ENCODE measurements at regions of chr18 and their contacts with region 1.

Region 1: GRCh38 chr18:50203801-50204604 is 9.1 kb upstream of the MYO5B start:
- DNase-seq: peak in 5 of 6 donors; percentile 41 to 72 (median 62)
- ATAC-seq: peak; percentile 67 to 96 (median 94)
- H3K4me3 ChIP-seq: no peak overlapping the region
- H3K27ac ChIP-seq: no peak overlapping the region
- H3K4me1 ChIP-seq: no peaks in the 10 kb centered on the region
- H3K27me3 ChIP-seq: no peaks in the 10 kb centered on the region
- CTCF ChIP-seq: peak; percentile 12 to 49 (median 37)

Region 2: GRCh38 chr18:50009773-50010335 is 194.1 kb before region 1 on chr18:
- intact Hi-C with region 1: loop called in 1 of 3 experiments (anchors 10 kb)
- DNase-seq: peak in 5 of 6 donors; percentile 38 to 62 (median 46)
- ATAC-seq: peak; percentile 83 to 95 (median 94)
- H3K4me3 ChIP-seq: no peak overlapping the region
- H3K27ac ChIP-seq: no peak overlapping the region
- H3K4me1 ChIP-seq: peaks cover 0 to 5% (median 0%) of the 10 kb centered on the region in 3 donors
- H3K27me3 ChIP-seq: no peaks in the 10 kb centered on the region
- CTCF ChIP-seq: peak; percentile 34 to 49 (median 44)

Region 3: DNA sequence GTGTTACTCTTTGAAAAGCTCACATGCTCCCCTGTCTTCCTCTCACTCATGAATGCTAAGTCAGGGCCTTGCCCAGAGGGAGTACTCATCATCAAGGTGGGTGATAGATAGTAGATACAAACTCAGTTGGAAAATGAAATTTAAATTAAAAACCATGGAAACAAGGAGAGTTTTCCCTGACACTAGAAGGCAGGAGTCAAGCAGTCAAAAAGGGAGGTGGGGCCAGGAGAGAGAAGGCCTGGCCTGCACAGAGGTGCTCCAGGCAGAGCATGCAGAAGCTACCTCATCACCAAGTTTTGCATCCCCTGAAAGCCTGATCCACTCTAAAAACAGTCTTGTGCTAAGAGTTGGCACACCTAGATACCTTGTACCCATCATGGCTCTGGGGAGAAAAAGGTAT is 152.7 kb before region 1 on chr18:
- intact Hi-C with region 1: loop called in 1 of 3 experiments (anchors 10 kb)
- DNase-seq: no peak
- ATAC-seq: peak in 3 of 4 donors; percentile 69 to 78 (median 72)
- H3K4me3 ChIP-seq: no peak overlapping the region
- H3K27ac ChIP-seq: no peak overlapping the region
- H3K4me1 ChIP-seq: no peaks in the 10 kb centered on the region
- H3K27me3 ChIP-seq: no peaks in the 10 kb centered on the region
- CTCF ChIP-seq: no peak

Region 4: GRCh38 chr18:50350699-50351098 is 146.7 kb after region 1 on chr18:
- intact Hi-C with region 1: no loop called
- DNase-seq: no peak
- ATAC-seq: no peak
- H3K4me3 ChIP-seq: no peak overlapping the region
- H3K27ac ChIP-seq: no peak overlapping the region
- H3K4me1 ChIP-seq: no peaks in the 10 kb centered on the region
- H3K27me3 ChIP-seq: peaks cover 0 to 4% (median 0%) of the 10 kb centered on the region in 4 donors
- CTCF ChIP-seq: no peak

Measured in pancreas (tissue), 10 donors.